Calu3 (cell line): ENCODE measurements at regions of chr11 and their contacts with region 1.

Region 1: DNA sequence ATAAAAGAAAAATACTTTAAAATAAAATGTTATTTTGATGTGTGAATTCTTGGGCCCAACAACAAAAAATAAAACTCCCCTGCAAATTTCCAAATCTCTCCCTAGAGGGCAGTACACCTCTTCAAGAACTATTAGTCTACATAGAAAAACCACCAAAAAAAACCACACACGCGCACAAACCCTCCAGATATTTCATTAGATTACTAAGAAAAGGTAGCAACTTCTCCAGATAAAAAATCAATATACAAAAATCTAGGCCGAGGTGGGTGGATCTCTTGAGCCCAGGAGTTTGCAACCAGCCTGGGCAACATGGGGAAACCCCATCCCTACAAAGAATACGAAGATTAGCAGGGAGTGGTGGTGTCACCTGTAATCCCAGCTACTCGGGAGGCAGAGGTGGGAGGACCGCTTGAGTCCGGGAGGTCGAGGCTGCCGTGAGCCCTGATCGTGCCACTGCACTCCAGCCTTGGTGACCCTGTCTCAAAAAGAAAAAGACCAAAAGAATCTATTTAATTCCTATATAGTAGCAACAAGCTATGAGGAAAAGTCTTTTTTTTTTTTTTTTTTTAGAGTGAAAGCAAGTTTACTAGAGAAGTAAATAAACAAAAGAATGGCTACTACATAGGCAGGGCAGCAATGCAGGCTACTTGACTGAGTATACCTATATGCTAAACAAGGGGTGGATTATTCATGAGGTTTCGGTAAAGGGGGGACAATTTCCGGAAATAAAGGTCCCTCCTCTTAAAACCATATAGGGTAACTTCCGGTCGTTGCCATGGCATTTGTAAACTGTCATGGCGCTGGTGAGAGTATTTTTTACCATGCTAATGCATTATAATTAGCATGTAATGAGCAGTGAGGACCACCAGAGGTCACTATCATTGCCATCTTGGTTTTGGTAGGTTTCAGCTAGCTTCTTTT is 13.1 kb downstream of the B3GNT6 start:
- DNase-seq: peak; percentile 81
- H3K4me3 Mint-ChIP-seq: peak overlapping the region; percentile 62
- H3K27ac Mint-ChIP-seq: peak overlapping the region; percentile 57
- H3K4me1 Mint-ChIP-seq: peaks cover 11% of the 10 kb centered on the region
- H3K27me3 Mint-ChIP-seq: no peaks in the 10 kb centered on the region
- CTCF ChIP-seq: peak; percentile 57

Region 2: GRCh38 chr11:76734456-76735420 is 312.5 kb before region 1 on chr11:
- CTCF ChIA-PET with region 1: interaction called, 3 read pairs
- intact Hi-C with region 1: loop called (anchors 1 kb)
- DNase-seq: no peak
- H3K4me3 Mint-ChIP-seq: no peak overlapping the region
- H3K27ac Mint-ChIP-seq: no peak overlapping the region
- H3K4me1 Mint-ChIP-seq: no peaks in the 10 kb centered on the region
- H3K27me3 Mint-ChIP-seq: peaks cover 32% of the 10 kb centered on the region
- CTCF ChIP-seq: no peak

Region 3: GRCh38 chr11:76919887-76920746 is 127.2 kb before region 1 on chr11:
- CTCF ChIA-PET with region 1: interaction called, 57 read pairs
- intact Hi-C with region 1: loop called (anchors 1 kb)
- DNase-seq: peak; percentile 82
- H3K4me3 Mint-ChIP-seq: peak overlapping the region; percentile 51
- H3K27ac Mint-ChIP-seq: peak overlapping the region; percentile 71
- H3K4me1 Mint-ChIP-seq: peaks cover 8% of the 10 kb centered on the region
- H3K27me3 Mint-ChIP-seq: no peaks in the 10 kb centered on the region
- CTCF ChIP-seq: peak; percentile 81

Region 4: GRCh38 chr11:77073328-77074001 is 26.2 kb after region 1 on chr11:
- CTCF ChIA-PET with region 1: interaction called, 15 read pairs
- intact Hi-C with region 1: no loop called
- DNase-seq: peak; percentile 73
- H3K4me3 Mint-ChIP-seq: peak overlapping the region; percentile 49
- H3K27ac Mint-ChIP-seq: peak overlapping the region; percentile 79
- H3K4me1 Mint-ChIP-seq: peaks cover 63% of the 10 kb centered on the region
- H3K27me3 Mint-ChIP-seq: no peaks in the 10 kb centered on the region
- CTCF ChIP-seq: peak; percentile 13

Region 5: DNA sequence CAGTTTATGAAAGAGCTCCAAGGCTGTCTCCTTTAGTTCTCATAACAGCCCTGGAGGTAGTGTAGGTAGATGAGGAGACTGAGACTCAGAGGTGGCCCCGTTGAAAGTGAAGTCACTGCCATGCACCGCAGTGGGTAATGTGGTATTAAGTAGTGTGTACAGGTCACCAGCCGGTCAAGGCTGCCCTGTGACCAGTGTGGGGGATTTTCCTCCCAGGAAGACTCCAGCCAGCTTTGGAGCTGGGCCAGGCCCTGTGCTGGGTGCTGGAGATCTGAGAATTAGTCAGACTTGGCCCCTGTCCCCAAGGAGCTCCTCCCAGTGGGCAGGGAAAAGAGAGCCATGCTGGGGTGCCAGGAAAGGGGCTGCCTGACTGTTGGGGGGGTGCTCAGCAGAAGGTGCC is 60.7 kb after region 1 on chr11:
- CTCF ChIA-PET with region 1: interaction called, 17 read pairs
- intact Hi-C with region 1: loop called (anchors 1 kb)
- DNase-seq: peak; percentile 91
- H3K4me3 Mint-ChIP-seq: peak overlapping the region; percentile 62
- H3K27ac Mint-ChIP-seq: peak overlapping the region; percentile 66
- H3K4me1 Mint-ChIP-seq: peaks cover 33% of the 10 kb centered on the region
- H3K27me3 Mint-ChIP-seq: no peaks in the 10 kb centered on the region
- CTCF ChIP-seq: no peak

Region 6: DNA sequence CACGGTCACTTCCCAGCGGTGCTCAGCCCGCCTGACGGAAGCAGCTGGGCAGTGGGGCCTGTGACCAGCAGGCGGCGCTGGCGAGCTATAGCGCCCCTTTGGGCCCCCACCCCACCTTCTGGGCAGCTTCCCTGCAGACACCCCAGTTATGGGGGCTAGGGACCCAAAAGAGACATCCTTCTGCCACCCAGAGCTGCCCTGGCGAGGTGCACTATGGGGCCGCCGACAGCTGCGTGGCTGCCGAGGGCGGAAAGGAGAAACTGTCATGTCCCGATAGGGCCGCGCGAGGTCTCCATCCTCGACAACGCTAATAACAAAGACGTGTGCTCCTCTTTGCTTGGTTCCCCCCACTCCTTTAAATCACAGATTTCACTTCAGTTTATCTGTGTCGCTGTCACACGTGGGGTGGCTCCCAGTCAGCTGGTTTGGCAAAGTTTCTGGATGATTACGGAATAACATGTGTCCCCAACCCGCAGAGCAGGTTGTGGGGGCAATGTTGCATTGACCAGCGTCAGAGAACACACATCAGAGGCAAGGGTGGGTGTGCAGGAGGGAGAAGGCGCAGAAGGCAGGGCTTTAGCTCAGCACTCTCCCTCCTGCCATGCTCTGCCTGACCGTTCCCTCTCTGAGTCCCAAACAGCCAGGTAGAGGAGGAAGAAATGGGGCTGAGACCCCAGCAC is 80.1 kb after region 1 on chr11:
- CTCF ChIA-PET with region 1: interaction called, 13 read pairs
- intact Hi-C with region 1: no loop called
- DNase-seq: peak; percentile 67
- H3K4me3 Mint-ChIP-seq: peak overlapping the region; percentile 62
- H3K27ac Mint-ChIP-seq: no peak overlapping the region
- H3K4me1 Mint-ChIP-seq: peaks cover 8% of the 10 kb centered on the region
- H3K27me3 Mint-ChIP-seq: no peaks in the 10 kb centered on the region
- CTCF ChIP-seq: peak; percentile 99